Ovary (tissue), 10 donors: ENCODE measurements at regions of chr18 and their contacts with region 1.

Region 1: DNA sequence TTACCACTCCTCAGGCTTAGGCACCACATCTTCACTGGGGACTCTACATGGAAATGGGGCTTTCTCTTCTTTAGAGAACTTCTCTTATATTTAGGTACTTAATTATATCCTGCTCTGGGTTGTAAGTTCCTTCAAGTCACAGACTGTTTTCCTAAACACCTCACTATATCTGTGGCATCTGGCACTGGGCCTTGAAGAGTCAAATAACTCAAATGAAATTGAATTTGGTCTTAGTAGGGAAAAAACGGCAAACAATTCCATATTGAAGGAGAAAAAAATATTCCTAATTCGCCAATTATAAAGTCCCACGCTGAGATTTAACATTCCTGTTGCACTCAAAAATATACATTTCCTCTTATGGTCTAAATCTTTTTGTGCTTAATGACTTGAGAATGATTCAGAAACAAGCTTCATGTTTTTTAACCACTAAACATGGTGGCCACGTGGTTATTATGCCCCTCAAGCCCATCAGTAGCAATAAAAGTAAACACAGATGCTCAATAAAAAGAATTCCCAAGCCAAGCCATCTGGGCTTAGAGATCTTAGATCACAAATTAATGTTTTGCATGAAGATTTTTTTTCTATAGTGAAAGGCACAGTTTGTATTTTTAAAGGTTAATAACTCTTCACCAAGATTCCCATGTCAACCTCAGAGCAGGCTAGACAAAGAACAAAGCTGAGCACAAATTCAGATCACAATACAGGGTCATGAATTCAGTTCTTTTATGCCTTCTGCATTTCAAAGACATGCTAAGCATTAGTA is 105.5 kb upstream of the SYT4 start:
- DNase-seq: no peak
- H3K4me3 ChIP-seq: no peak overlapping the region
- H3K27ac ChIP-seq: no peak overlapping the region
- H3K4me1 ChIP-seq: no peaks in the 10 kb centered on the region
- H3K27me3 ChIP-seq: no peaks in the 10 kb centered on the region
- CTCF ChIP-seq: no peak
- EP300 ChIP-seq: no peak
- POLR2A ChIP-seq: no peak

Region 2: DNA sequence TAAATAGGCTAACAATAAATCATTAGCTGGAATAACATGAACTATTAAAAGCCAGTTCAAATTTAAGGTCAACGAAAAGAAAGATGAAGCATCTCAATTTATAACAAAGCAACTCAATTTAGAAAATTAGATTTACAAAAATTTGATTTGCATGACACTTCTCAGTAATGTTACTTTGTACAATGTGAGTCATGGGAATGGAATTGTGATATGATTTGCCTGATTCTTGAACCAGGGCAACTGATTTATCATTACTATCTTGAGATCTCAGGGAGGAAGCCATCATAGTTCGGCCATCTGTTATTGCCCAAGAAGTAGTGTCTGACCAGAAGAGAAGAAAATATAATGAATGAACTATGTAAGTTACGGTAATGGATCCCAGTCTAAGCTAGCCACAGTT is 460.5 kb before region 1 on chr18:
- intact Hi-C with region 1: loop called in 1 of 4 experiments (anchors 5 kb)
- DNase-seq: no peak
- H3K4me3 ChIP-seq: no peak overlapping the region
- H3K27ac ChIP-seq: no peak overlapping the region
- H3K4me1 ChIP-seq: no peaks in the 10 kb centered on the region
- H3K27me3 ChIP-seq: no peaks in the 10 kb centered on the region
- CTCF ChIP-seq: no peak
- EP300 ChIP-seq: no peak
- POLR2A ChIP-seq: no peak

Region 3: GRCh38 chr18:43108469-43108868 is 274.4 kb before region 1 on chr18:
- intact Hi-C with region 1: no loop called
- DNase-seq: no peak
- H3K4me3 ChIP-seq: no peak overlapping the region
- H3K27ac ChIP-seq: no peak overlapping the region
- H3K4me1 ChIP-seq: no peaks in the 10 kb centered on the region
- H3K27me3 ChIP-seq: no peaks in the 10 kb centered on the region
- CTCF ChIP-seq: no peak
- EP300 ChIP-seq: no peak
- POLR2A ChIP-seq: no peak